CD4-positive, alpha-beta T cell (primary cell): ENCODE measurements at regions of chr16 and their contacts with region 1.

Region 1: GRCh38 chr16:58629572-58630104 is at the start of gene CNOT1:
- DNase-seq: peak; percentile 94 to 99 (median 97)
- ATAC-seq: peak; percentile 81
- H3K4me3 ChIP-seq: peak within 1 kb of the TSS; percentile 93
- H3K4me3 Mint-ChIP-seq: peak within 1 kb of the TSS; percentile 98
- H3K27ac ChIP-seq: peak within 1 kb of the TSS; percentile 99 to 100
- H3K27ac Mint-ChIP-seq: peak within 1 kb of the TSS; percentile 96
- H3K4me1 ChIP-seq: peaks cover 37% of the 10 kb centered on the region
- H3K4me1 Mint-ChIP-seq: peaks cover 28% of the 10 kb centered on the region
- H3K27me3 ChIP-seq: no peaks in the 10 kb centered on the region
- H3K27me3 Mint-ChIP-seq: no peaks in the 10 kb centered on the region
- CTCF ChIP-seq: no peak
- total RNA-seq, gene CNOT1: 164 to 184 TPM

Region 2: DNA sequence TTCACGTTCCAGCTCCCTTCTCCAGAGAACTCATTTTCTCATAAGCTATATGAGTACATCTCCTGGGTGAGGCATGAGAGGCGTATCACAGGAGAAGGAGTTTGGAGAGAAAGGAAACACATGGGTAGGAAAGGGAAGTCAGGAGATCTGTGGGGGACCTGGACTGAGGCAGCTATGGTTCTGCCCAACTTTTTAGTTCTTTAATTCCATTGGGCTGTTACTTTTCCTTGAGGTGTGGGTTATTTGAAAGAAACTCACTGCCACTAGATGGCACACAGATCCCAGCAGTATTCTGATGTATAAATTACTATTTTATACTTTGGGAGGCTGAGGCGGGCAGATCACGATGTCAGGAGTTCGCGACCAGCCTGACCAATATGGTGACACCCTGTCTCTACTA is 1836.1 kb before region 1 on chr16:
- CTCF ChIA-PET with region 1: no interaction called
- POLR2A ChIA-PET with region 1: no interaction called
- intact Hi-C with region 1: no loop called
- DNase-seq: peak in 3 of 14 experiments; percentile 24 to 52 (median 36)
- ATAC-seq: no peak
- H3K4me3 ChIP-seq: no peak overlapping the region
- H3K4me3 Mint-ChIP-seq: no peak overlapping the region
- H3K27ac ChIP-seq: no peak overlapping the region
- H3K27ac Mint-ChIP-seq: no peak overlapping the region
- H3K4me1 ChIP-seq: no peaks in the 10 kb centered on the region
- H3K4me1 Mint-ChIP-seq: no peaks in the 10 kb centered on the region
- H3K27me3 ChIP-seq: no peaks in the 10 kb centered on the region
- H3K27me3 Mint-ChIP-seq: no peaks in the 10 kb centered on the region
- CTCF ChIP-seq: no peak

Region 3: GRCh38 chr16:57994778-57995177 is 634.9 kb before region 1 on chr16:
- CTCF ChIA-PET with region 1: no interaction called
- POLR2A ChIA-PET with region 1: no interaction called
- intact Hi-C with region 1: loop called in 1 of 2 experiments (anchors 10 kb)
- DNase-seq: peak in 9 of 14 experiments; percentile 20 to 79 (median 34)
- ATAC-seq: peak; percentile 31
- H3K4me3 ChIP-seq: no peak overlapping the region
- H3K4me3 Mint-ChIP-seq: peak overlapping the region; percentile 45
- H3K27ac ChIP-seq: peak overlapping the region; percentile 48 to 53
- H3K27ac Mint-ChIP-seq: peak overlapping the region; percentile 83
- H3K4me1 ChIP-seq: peaks cover 70% of the 10 kb centered on the region
- H3K4me1 Mint-ChIP-seq: peaks cover 45% of the 10 kb centered on the region
- H3K27me3 ChIP-seq: no peaks in the 10 kb centered on the region
- H3K27me3 Mint-ChIP-seq: no peaks in the 10 kb centered on the region
- CTCF ChIP-seq: no peak

Region 4: GRCh38 chr16:58249780-58250478 is 379.7 kb before region 1 on chr16:
- CTCF ChIA-PET with region 1: no interaction called
- POLR2A ChIA-PET with region 1: no interaction called
- intact Hi-C with region 1: loop called in 1 of 2 experiments (anchors 5 kb)
- DNase-seq: peak; percentile 65 to 94 (median 82)
- ATAC-seq: peak; percentile 98
- H3K4me3 ChIP-seq: peak overlapping the region; percentile 73
- H3K4me3 Mint-ChIP-seq: peak overlapping the region; percentile 84
- H3K27ac ChIP-seq: no peak overlapping the region
- H3K27ac Mint-ChIP-seq: no peak overlapping the region
- H3K4me1 ChIP-seq: peaks cover 16% of the 10 kb centered on the region
- H3K4me1 Mint-ChIP-seq: peaks cover 14% of the 10 kb centered on the region
- H3K27me3 ChIP-seq: no peaks in the 10 kb centered on the region
- H3K27me3 Mint-ChIP-seq: peaks cover 8% of the 10 kb centered on the region
- CTCF ChIP-seq: no peak

Region 5: DNA sequence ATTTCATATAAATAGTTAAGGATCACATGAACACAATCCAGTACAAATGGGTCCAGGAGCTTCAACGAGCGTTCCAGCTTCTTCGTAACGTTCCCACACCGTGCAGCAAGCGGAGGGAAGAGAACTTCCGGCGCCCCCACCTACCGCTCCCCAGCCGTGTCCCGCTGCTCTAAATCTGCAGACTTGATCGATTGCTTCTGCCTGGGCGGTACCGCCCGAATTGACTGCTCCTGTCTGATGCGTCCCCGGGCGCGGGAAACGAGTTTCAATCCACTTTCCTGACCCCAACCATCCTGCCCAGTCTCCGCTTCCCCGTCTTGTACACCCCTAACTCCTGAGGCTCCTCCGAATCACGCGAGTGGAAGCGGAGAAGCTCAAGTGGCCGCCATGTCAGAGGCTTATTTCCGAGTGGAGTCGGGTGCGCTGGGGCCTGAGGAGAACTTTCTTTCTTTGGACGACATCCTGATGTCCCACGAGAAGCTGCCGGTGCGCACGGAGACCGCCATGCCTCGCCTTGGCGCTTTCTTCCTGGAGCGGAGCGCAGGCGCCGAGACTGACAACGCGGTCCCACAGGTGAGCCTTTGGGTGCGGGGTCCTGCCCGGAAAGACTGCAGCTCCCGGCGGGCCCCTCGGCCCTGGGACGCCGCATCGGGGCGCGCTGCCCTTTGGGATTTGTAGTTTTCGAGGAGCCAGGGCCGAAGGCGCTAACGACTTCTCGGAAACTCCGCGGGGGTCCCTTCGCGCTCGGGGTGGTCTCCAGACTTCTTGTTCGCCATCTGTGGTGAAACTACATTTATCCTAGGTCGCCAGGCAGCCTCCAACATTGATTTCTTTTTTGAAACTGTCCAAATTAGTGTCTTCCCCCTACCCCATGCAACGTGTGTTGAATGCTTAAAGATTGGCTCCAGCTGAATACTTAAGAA is 237.2 kb before region 1 on chr16 and contains the start of gene GINS3:
- CTCF ChIA-PET with region 1: no interaction called
- POLR2A ChIA-PET with region 1: no interaction called
- intact Hi-C with region 1: loop called (anchors 1 to 2 kb)
- DNase-seq: peak; percentile 66 to 91 (median 78)
- ATAC-seq: peak; percentile 97
- H3K4me3 ChIP-seq: peak within 1 kb of the TSS; percentile 100
- H3K4me3 Mint-ChIP-seq: peak within 1 kb of the TSS; percentile 100
- H3K27ac ChIP-seq: peak within 1 kb of the TSS; percentile 62 to 89
- H3K27ac Mint-ChIP-seq: peak within 1 kb of the TSS; percentile 92
- H3K4me1 ChIP-seq: peaks cover 12% of the 10 kb centered on the region
- H3K4me1 Mint-ChIP-seq: peaks cover 17% of the 10 kb centered on the region
- H3K27me3 ChIP-seq: no peaks in the 10 kb centered on the region
- H3K27me3 Mint-ChIP-seq: no peaks in the 10 kb centered on the region
- CTCF ChIP-seq: no peak
- total RNA-seq, gene GINS3: 0.27 to 0.36 TPM

Region 6: DNA sequence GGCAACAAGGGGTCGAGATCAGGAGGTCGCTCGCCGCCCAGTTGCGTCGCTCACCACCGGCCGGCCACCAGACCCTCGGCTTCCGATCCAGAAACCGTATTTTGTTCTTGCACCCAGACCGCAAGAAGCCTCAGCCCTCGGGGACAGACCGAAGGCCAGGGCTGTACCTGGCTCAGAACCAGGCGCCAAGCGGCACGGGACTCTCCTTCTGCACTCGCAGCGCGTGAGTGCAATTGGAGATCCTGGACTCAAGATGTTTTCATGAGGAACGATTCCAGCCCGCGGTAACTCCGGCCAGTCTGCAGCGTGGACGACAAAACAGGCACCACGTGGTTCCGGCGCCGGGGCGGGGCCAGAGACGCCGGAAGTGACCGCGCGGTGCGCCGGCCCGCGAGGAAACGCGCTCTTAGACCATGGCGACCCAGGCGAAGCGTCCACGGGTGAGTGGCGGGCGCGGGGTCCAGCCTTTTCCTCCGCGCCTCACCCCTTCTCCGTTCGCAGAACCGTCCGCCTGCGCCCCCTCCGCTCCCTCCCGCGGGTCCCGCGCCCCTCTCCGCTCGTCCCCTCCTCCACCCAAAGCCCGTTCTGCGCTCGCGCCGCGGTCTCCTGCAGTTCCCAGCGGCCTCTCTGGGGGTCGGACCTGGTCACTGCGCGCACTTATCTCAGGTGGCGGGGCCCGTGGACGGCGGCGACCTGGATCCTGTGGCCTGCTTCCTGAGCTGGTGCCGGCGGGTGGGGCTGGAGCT is 114.3 kb before region 1 on chr16 and contains the start of gene SETD6:
- CTCF ChIA-PET with region 1: interaction called, 4 read pairs
- POLR2A ChIA-PET with region 1: no interaction called
- intact Hi-C with region 1: loop called in 1 of 2 experiments (anchors 2 kb)
- DNase-seq: peak in 13 of 14 experiments; percentile 31 to 80 (median 65)
- ATAC-seq: peak; percentile 53
- H3K4me3 ChIP-seq: peak within 1 kb of the TSS; percentile 75
- H3K4me3 Mint-ChIP-seq: peak within 1 kb of the TSS; percentile 90
- H3K27ac ChIP-seq: peak within 1 kb of the TSS; percentile 66 to 72
- H3K27ac Mint-ChIP-seq: peak within 1 kb of the TSS; percentile 90
- H3K4me1 ChIP-seq: peaks cover 21% of the 10 kb centered on the region
- H3K4me1 Mint-ChIP-seq: peaks cover 38% of the 10 kb centered on the region
- H3K27me3 ChIP-seq: no peaks in the 10 kb centered on the region
- H3K27me3 Mint-ChIP-seq: no peaks in the 10 kb centered on the region
- CTCF ChIP-seq: no peak
- total RNA-seq, gene SETD6: 21.9 to 25.5 TPM

Region 7: GRCh38 chr16:58684354-58685083 is 54.9 kb after region 1 on chr16 and contains the start of gene SLC38A7:
- CTCF ChIA-PET with region 1: no interaction called
- POLR2A ChIA-PET with region 1: interaction called, 7 read pairs
- intact Hi-C with region 1: loop called (anchors 1 to 2 kb)
- DNase-seq: peak; percentile 50 to 84 (median 64)
- ATAC-seq: peak; percentile 90
- H3K4me3 ChIP-seq: peak within 1 kb of the TSS; percentile 77
- H3K4me3 Mint-ChIP-seq: peak within 1 kb of the TSS; percentile 91
- H3K27ac ChIP-seq: peak within 1 kb of the TSS; percentile 13 to 18
- H3K27ac Mint-ChIP-seq: peak within 1 kb of the TSS; percentile 31
- H3K4me1 ChIP-seq: peaks cover 19% of the 10 kb centered on the region
- H3K4me1 Mint-ChIP-seq: peaks cover 20% of the 10 kb centered on the region
- H3K27me3 ChIP-seq: no peaks in the 10 kb centered on the region
- H3K27me3 Mint-ChIP-seq: no peaks in the 10 kb centered on the region
- CTCF ChIP-seq: no peak
- total RNA-seq, gene SLC38A7: 5.3 to 5.6 TPM

Region 8: GRCh38 chr16:58733671-58734458 is 104.2 kb after region 1 on chr16 and contains the start of gene GOT2:
- CTCF ChIA-PET with region 1: interaction called, 3 read pairs
- POLR2A ChIA-PET with region 1: no interaction called
- intact Hi-C with region 1: loop called in 1 of 2 experiments (anchors 5 kb)
- DNase-seq: peak; percentile 62 to 89 (median 74)
- ATAC-seq: peak; percentile 97
- H3K4me3 ChIP-seq: peak within 1 kb of the TSS; percentile 92
- H3K4me3 Mint-ChIP-seq: peak within 1 kb of the TSS; percentile 99
- H3K27ac ChIP-seq: peak within 1 kb of the TSS in 1 of 2 donors; percentile 43
- H3K27ac Mint-ChIP-seq: peak within 1 kb of the TSS; percentile 71
- H3K4me1 ChIP-seq: peaks cover 15% of the 10 kb centered on the region
- H3K4me1 Mint-ChIP-seq: peaks cover 56% of the 10 kb centered on the region
- H3K27me3 ChIP-seq: no peaks in the 10 kb centered on the region
- H3K27me3 Mint-ChIP-seq: no peaks in the 10 kb centered on the region
- CTCF ChIP-seq: peak; percentile 88
- total RNA-seq, gene GOT2: 17.4 to 18.7 TPM